ENCODE measurements at regions of chr15 and their contacts with region 1.

Region 1: DNA sequence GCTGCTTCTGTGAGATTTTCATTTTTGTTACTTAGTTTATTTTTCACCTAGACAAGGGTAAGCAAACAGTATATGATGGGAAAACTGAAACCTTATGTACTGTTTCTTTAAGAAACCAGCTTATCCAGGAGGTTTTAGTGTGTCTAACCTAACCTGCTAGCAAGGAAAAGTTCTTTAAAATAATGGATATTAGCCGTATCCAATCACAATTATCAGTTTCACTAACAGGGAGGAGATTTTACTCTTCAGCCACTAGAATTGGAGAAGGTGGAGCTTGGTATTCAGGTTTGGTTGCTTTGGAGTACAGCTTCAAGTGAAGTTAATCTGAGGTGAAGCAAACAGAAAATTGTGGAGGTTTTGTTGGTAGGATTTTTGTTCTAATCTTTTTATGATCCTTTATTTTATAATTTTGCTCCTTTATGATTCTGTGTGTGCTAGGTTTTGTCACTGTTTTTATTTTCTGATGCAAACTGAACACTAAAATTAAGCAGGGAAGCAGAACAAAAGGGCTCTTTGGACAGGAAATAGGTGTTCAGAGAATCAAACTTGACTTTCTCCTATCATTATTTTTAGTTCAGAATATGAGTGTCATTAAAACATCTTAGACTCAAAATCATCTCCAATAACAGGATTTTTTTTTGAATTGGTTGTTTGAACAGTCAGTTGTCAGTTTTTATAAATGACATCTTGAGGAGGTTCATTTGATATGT is 13.0 kb downstream of the ZFAND6 start:
- DNase-seq: peak; percentile 83
- ATAC-seq: peak; percentile 88
- H3K4me3 ChIP-seq: peak overlapping the region; percentile 57
- H3K27ac ChIP-seq: peak overlapping the region; percentile 59
- H3K4me1 ChIP-seq: peaks cover 13% of the 10 kb centered on the region; the same call in 1 of the 2 replicates
- H3K27me3 ChIP-seq: no peaks in the 10 kb centered on the region
- CTCF ChIP-seq: no peak
- EP300 ChIP-seq: no peak
- POLR2A ChIP-seq: no peak
- RAD21 ChIP-seq: no peak

Region 2: DNA sequence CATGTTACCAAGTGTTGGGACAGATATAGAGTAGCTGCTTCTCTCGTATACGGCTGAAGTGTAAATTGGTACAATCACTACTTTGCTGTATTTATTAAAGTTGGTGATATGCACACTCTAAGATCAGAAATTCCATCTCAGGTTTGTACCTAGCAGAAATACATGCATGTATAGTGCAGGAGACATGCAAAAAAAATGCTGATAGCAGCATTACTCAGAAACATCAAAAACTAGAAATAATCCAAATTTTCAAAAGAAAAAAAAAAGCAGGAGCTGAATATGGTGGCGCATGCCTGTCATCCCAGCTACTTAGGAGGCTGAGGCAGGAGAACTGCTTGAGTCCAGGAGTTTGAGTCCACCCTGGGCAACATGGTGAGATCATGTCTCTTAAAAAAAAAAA is 70.2 kb before region 1 on chr15:
- CTCF ChIA-PET with region 1: no interaction called
- POLR2A ChIA-PET with region 1: no interaction called
- RAD21 ChIA-PET with region 1: no interaction called
- SMC1A ChIA-PET with region 1: no interaction called
- in situ Hi-C with region 1: no loop called
- intact Hi-C with region 1: no loop called
- DNase-seq: no peak
- ATAC-seq: no peak
- H3K4me3 ChIP-seq: no peak overlapping the region
- H3K27ac ChIP-seq: no peak overlapping the region
- H3K4me1 ChIP-seq: no peaks in the 10 kb centered on the region
- H3K27me3 ChIP-seq: no peaks in the 10 kb centered on the region
- CTCF ChIP-seq: no peak
- EP300 ChIP-seq: no peak
- POLR2A ChIP-seq: no peak
- RAD21 ChIP-seq: no peak

Region 3: DNA sequence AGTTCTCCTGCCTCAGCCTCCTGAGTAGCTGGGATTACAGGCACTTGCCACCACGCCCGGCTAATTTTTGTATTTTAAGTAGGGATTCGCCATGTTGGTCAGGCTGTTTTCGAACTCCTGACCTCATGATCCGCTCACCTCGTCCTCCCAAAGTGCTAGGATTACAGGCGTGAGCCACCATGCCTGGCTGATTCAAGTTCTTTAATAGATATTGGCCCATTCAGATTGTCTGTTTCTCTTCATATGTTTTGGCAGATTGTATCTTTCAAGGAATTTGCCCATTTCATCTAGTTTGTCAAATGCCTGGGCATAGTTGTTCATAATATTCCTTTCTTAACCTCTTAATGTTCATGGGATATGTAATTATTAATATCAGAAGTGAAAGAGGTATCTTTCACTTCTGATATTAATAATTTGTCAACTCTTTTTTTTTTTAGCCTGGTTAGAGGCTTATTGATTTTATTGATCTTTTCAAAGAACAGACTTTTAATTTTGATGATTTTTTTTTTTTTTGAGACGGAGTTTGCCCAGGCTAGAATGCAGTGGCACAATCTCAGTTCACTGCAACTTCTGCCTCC is 53.2 kb before region 1 on chr15:
- CTCF ChIA-PET with region 1: no interaction called
- POLR2A ChIA-PET with region 1: interaction called, 4 read pairs
- RAD21 ChIA-PET with region 1: interaction called, 12 read pairs
- SMC1A ChIA-PET with region 1: interaction called, 20 read pairs
- in situ Hi-C with region 1: no loop called
- intact Hi-C with region 1: no loop called
- DNase-seq: no peak
- ATAC-seq: peak; percentile 4
- H3K4me3 ChIP-seq: peak overlapping the region; percentile 60
- H3K27ac ChIP-seq: peak overlapping the region; percentile 92
- H3K4me1 ChIP-seq: peaks cover 30% of the 10 kb centered on the region
- H3K27me3 ChIP-seq: no peaks in the 10 kb centered on the region
- CTCF ChIP-seq: no peak
- EP300 ChIP-seq: peak; percentile 8 to 43; a peak in 1 of 4 replicates
- POLR2A ChIP-seq: no peak
- RAD21 ChIP-seq: no peak

Region 4: DNA sequence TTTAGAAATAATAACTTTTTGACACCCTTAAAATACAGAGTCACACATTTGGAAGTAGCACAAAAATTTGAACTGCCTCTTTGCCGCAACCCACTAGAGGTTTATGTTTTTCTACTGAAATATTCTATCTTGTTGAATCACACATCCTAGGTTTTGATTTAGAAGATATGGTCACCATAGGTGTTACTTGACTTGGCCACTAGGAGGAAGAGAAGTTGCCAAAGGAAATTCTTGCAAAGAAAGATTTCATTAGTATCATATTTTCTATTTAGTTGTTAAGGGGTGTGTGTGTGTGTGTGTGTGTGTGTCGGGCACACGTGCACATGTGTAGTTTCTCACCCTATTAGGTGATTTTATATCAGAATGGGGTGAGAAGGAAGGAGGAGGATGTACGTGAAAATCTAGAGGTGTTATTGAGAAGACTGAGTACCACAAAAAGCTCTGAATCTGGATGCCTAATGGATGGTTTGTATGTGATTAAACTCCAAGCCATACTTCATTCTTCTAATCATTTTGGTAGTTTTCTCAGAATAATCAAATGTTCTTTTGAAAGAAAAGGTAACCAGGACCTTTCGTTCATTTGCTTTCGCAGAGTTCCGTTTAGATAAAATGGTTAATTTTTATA is 18.6 kb after region 1 on chr15:
- CTCF ChIA-PET with region 1: interaction called, 6 read pairs
- POLR2A ChIA-PET with region 1: interaction called, 3 read pairs
- RAD21 ChIA-PET with region 1: no interaction called
- SMC1A ChIA-PET with region 1: interaction called, 12 read pairs
- in situ Hi-C with region 1: no loop called
- intact Hi-C with region 1: no loop called
- DNase-seq: no peak
- ATAC-seq: peak; percentile 67
- H3K4me3 ChIP-seq: no peak overlapping the region
- H3K27ac ChIP-seq: no peak overlapping the region
- H3K4me1 ChIP-seq: no peaks in the 10 kb centered on the region
- H3K27me3 ChIP-seq: no peaks in the 10 kb centered on the region
- CTCF ChIP-seq: peak; percentile 4 to 42 (median 31); a peak in 2 of 6 replicates
- EP300 ChIP-seq: no peak
- POLR2A ChIP-seq: no peak
- RAD21 ChIP-seq: 0 out of 2 replicates have a peak, but pooled peaks have one; percentile 24

Region 5: GRCh38 chr15:80118956-80119355 is 46.5 kb after region 1 on chr15:
- CTCF ChIA-PET with region 1: no interaction called
- POLR2A ChIA-PET with region 1: no interaction called
- RAD21 ChIA-PET with region 1: no interaction called
- SMC1A ChIA-PET with region 1: no interaction called
- in situ Hi-C with region 1: no loop called
- intact Hi-C with region 1: no loop called
- DNase-seq: no peak
- ATAC-seq: no peak
- H3K4me3 ChIP-seq: no peak overlapping the region
- H3K27ac ChIP-seq: no peak overlapping the region
- H3K4me1 ChIP-seq: no peaks in the 10 kb centered on the region
- H3K27me3 ChIP-seq: no peaks in the 10 kb centered on the region
- CTCF ChIP-seq: no peak
- EP300 ChIP-seq: no peak
- POLR2A ChIP-seq: no peak
- RAD21 ChIP-seq: no peak

Region 6: GRCh38 chr15:80152180-80152845 is 79.9 kb after region 1 on chr15:
- CTCF ChIA-PET with region 1: no interaction called
- POLR2A ChIA-PET with region 1: no interaction called
- RAD21 ChIA-PET with region 1: interaction called, 10 read pairs
- SMC1A ChIA-PET with region 1: interaction called, 4 read pairs
- in situ Hi-C with region 1: no loop called
- intact Hi-C with region 1: no loop called
- DNase-seq: peak; percentile 43
- ATAC-seq: peak; percentile 81
- H3K4me3 ChIP-seq: peak overlapping the region; percentile 74
- H3K27ac ChIP-seq: no peak overlapping the region; the same call in 1 of the 2 replicates
- H3K4me1 ChIP-seq: peaks cover 8% of the 10 kb centered on the region
- H3K27me3 ChIP-seq: no peaks in the 10 kb centered on the region
- CTCF ChIP-seq: no peak
- EP300 ChIP-seq: no peak
- POLR2A ChIP-seq: no peak
- RAD21 ChIP-seq: no peak